ENCODE measurements at regions of chr19 and their contacts with region 1.

Region 1: DNA sequence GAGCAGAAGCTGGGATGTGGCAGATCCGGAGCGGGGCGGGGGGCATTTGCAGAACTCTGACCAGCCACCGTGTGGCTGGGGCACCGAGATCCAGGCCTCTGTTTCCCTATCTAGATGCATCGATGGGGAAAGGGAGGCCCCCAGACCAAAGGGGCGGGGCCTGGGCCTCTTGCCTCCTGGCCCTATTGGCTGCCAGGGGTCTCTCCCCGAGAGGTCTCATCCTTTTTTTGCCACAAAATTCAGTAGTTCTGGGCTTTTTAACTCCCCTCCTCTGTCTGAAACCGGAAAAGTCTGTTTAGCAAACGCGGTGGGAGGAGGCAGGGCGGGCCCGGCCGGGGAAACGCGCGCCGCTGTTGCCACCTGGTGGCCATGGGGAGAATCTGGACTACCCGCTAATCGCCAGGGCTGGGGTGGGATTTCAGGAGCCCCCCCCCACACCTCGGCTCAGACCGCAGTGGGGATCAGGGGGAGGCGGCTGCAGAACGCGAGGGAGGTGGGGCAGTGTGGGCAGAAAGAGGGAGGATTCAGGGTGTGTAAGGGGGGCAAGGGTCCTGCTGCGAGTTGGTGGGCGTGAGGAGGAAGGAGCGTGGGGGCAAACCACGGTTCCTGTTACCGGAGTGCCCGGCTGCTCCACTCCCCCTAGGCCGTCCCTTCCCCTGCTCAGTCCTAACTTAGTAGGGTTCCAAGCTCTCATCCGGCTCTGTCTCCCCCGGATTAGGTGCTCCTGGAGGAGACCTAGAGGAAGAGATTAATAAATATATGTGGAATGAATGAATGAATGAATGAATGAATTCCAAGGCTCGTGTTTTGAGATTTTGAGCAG is 28.3 kb downstream of the IL12RB1 start:
- DNase-seq: peak; percentile 81
- ATAC-seq: peak; percentile 93
- H3K4me3 Mint-ChIP-seq: peak overlapping the region; percentile 58
- H3K27ac Mint-ChIP-seq: peak overlapping the region; percentile 76
- H3K4me1 Mint-ChIP-seq: peaks cover 21% of the 10 kb centered on the region
- H3K27me3 Mint-ChIP-seq: no peaks in the 10 kb centered on the region
- CTCF ChIP-seq: peak; percentile 88

Region 2: DNA sequence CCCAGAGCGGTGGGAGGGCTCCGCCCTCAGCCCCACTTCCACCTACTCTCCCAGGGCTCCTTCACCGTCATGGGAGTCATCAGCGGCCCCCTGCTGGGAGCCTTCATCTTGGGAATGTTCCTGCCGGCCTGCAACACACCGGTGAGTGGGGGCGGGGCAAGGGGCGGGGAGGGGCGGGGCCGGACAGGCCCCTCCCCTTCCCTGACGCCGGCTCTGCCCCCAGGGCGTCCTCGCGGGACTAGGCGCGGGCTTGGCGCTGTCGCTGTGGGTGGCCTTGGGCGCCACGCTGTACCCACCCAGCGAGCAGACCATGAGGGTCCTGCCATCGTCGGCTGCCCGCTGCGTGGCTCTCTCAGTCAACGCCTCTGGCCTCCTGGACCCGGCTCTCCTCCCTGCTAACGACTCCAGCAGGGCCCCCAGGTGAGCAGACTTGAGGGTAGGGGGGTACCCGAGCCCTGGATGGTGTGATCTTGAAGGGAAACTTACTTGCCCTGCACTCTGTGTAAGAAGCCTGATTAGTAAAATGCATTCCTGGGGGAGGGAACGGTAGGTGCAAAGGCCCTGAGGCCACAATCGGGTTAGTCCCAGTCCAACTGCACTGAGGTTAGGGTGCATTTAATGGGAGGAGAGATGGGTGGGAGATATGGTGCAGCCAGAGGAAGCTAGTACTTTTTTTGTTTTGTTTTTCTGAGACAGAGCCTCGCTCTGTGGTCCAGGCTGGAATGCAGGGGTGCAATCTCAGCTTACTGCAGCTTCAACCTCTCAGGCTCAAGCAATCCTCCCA is 174.6 kb before region 1 on chr19:
- CTCF ChIA-PET with region 1: no interaction called
- POLR2A ChIA-PET with region 1: no interaction called
- intact Hi-C with region 1: loop called (anchors 5 kb)
- DNase-seq: no peak
- ATAC-seq: no peak
- H3K4me3 Mint-ChIP-seq: no peak overlapping the region
- H3K27ac Mint-ChIP-seq: peak overlapping the region; percentile 12
- H3K4me1 Mint-ChIP-seq: peaks cover 37% of the 10 kb centered on the region
- H3K27me3 Mint-ChIP-seq: no peaks in the 10 kb centered on the region
- CTCF ChIP-seq: no peak

Region 3: GRCh38 chr19:17947815-17948513 is 110.5 kb before region 1 on chr19:
- CTCF ChIA-PET with region 1: no interaction called
- POLR2A ChIA-PET with region 1: no interaction called
- intact Hi-C with region 1: loop called (anchors 1 kb)
- DNase-seq: peak; percentile 98
- ATAC-seq: peak; percentile 63
- H3K4me3 Mint-ChIP-seq: peak overlapping the region; percentile 74
- H3K27ac Mint-ChIP-seq: no peak overlapping the region
- H3K4me1 Mint-ChIP-seq: peaks cover 59% of the 10 kb centered on the region
- H3K27me3 Mint-ChIP-seq: peaks cover 12% of the 10 kb centered on the region
- CTCF ChIP-seq: no peak

Region 4: DNA sequence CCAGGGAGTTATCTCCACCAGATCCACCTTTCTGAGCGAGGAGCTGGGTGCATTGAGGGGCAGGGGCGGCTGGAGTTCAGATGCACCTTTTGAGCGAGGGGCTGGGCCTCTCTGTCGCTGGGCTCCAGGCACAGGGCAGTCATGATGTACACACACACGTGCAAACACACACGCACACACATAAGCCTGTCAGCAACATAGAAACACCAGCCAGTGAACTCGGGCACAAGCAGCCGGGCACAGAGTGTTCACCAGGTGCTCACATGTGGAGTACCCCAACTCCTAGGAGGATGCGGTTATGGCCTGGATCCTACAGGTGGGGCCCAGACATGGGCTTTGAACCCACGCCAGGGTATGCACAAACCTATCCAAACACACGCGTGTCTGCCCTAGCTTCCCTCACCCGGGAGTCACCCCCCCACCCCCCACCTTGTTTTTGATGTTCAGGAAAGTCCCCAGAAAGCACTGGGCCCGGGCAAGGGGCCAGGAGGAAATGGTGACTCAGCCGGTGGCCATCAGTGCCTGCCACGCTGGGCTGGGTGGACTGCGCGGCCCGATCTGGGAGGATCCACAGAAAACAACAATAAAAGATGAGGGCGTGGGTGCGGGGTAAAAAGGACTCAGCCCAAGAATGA is 37.2 kb before region 1 on chr19:
- CTCF ChIA-PET with region 1: interaction called, 5 read pairs
- POLR2A ChIA-PET with region 1: interaction called, 94 read pairs
- intact Hi-C with region 1: loop called (anchors 1 kb)
- DNase-seq: peak; percentile 68
- ATAC-seq: peak; percentile 23
- H3K4me3 Mint-ChIP-seq: peak overlapping the region; percentile 69
- H3K27ac Mint-ChIP-seq: peak overlapping the region; percentile 97
- H3K4me1 Mint-ChIP-seq: peaks cover 80% of the 10 kb centered on the region
- H3K27me3 Mint-ChIP-seq: no peaks in the 10 kb centered on the region
- CTCF ChIP-seq: no peak

Region 5: DNA sequence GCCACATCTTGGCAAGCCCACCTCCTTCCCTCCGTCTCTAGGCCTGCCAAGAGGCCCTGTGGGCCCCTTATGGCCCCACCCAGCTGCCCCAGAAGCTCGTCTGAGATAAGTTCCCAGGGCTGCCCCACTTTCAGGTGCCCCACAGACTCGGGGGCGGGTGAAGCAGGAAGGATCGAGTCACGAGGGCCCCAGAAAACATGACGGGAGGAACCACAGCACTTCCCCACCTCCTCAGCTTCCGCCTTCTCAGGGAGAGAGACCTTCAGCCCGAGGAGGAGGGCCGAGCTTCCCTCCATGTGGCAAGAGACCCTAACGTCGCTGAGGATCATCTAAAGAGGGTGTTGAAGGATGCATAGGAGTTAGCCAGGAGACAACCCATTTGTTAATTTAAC is 32.8 kb after region 1 on chr19:
- CTCF ChIA-PET with region 1: no interaction called
- POLR2A ChIA-PET with region 1: interaction called, 10 read pairs
- intact Hi-C with region 1: no loop called
- DNase-seq: peak; percentile 58
- ATAC-seq: peak; percentile 68
- H3K4me3 Mint-ChIP-seq: peak overlapping the region; percentile 67
- H3K27ac Mint-ChIP-seq: peak overlapping the region; percentile 97
- H3K4me1 Mint-ChIP-seq: peaks cover 60% of the 10 kb centered on the region
- H3K27me3 Mint-ChIP-seq: no peaks in the 10 kb centered on the region
- CTCF ChIP-seq: no peak

Region 6: DNA sequence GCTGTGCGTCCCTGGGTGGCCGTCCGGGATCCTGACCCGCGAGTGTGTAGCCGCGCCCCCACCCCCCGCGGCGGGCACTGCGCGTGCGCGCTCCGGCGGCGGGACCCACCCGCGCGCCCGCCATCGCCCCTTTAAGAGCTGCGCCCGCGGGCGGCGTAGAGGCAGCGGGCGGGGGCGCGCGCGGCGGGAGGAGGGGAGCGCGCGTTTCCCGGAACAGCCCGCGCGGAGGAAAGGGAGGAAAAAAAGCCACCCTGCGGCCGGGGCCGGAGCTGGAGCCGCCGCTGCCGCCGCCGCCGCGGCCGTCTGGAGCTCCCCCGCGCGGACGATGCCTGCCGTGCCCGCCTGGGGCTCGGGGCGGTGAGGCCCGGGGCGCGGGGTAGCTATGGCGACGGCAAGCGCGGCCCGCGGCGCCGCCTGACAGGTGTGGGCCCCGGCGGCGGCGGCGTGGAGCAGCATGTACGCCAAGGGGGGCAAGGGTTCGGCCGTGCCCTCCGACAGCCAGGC is 360.8 kb after region 1 on chr19 and contains the start of gene SSBP4:
- CTCF ChIA-PET with region 1: no interaction called
- POLR2A ChIA-PET with region 1: no interaction called
- intact Hi-C with region 1: no loop called
- DNase-seq: peak; percentile 72
- ATAC-seq: peak; percentile 67
- H3K4me3 Mint-ChIP-seq: peak within 1 kb of the TSS; percentile 77
- H3K27ac Mint-ChIP-seq: peak within 1 kb of the TSS; percentile 12
- H3K4me1 Mint-ChIP-seq: peaks cover 73% of the 10 kb centered on the region
- H3K27me3 Mint-ChIP-seq: peaks cover 33% of the 10 kb centered on the region
- CTCF ChIP-seq: no peak
- total RNA-seq, gene SSBP4: 28.5 and 36.6 TPM in 2 replicates

Measured in activated B cell treated with CpG ODN at 0.5 μM for 24 hours (primary cell).